ENCODE measurements at regions of chr11 and their contacts with region 1.

Region 1: GRCh38 chr11:72030472-72031045 is 31.9 kb downstream of the IL18BP start:
- DNase-seq: no peak
- H3K4me3 ChIP-seq: no peak overlapping the region
- H3K4me3 Mint-ChIP-seq: peak overlapping the region in 2 of 8 donors; percentile 2 to 16
- H3K27ac ChIP-seq: no peak overlapping the region
- H3K27ac Mint-ChIP-seq: peak overlapping the region; percentile 27 to 90 (median 73)
- H3K4me1 ChIP-seq: peaks cover 55% of the 10 kb centered on the region
- H3K4me1 Mint-ChIP-seq: peaks cover 27 to 56% (median 45%) of the 10 kb centered on the region in 4 donors
- H3K27me3 ChIP-seq: no peaks in the 10 kb centered on the region
- H3K27me3 Mint-ChIP-seq: no peaks in the 10 kb centered on the region

Region 2: DNA sequence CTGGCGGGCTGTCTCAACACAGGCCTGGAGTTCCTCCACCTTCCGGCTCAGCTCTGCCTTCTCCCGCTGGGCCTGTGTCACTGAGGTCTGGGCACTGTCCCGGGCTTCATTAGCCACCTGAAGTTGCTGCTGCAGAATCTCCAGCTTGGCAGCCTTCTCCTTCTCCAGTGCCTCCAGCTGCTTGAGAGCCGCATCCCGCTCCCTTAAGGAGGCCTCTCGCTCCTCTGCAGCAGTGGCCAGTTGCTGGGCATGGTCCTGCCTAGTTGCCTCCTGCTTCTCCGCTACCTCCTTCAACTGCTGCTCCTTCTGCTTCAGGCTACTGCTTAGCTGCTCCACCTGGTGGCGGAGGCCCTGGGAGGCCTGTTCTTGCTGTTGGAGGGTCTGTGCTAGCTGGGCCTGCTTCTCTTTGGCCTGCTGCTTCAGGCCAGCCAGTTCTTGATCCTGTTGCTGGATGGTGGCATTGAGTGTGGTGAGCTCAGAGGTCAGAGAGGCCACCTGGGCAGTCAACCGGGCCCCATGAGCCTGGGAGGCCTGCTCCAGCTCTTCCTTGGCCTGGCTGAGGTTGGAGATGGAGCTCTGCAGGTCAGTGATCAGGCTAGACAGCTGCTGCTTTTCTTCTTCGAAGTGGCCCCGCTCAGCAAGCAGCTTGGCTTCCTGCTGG is 14.9 kb before region 1 on chr11:
- CTCF ChIA-PET with region 1: interaction called, 22 read pairs
- POLR2A ChIA-PET with region 1: interaction called, 3 read pairs
- intact Hi-C with region 1: no loop called
- DNase-seq: no peak
- H3K4me3 ChIP-seq: no peak overlapping the region
- H3K4me3 Mint-ChIP-seq: no peak overlapping the region
- H3K27ac ChIP-seq: no peak overlapping the region
- H3K27ac Mint-ChIP-seq: peak overlapping the region in 2 of 7 donors; percentile 53 to 65
- H3K4me1 ChIP-seq: no peaks in the 10 kb centered on the region
- H3K4me1 Mint-ChIP-seq: peaks cover 0 to 4% (median 2%) of the 10 kb centered on the region in 4 donors
- H3K27me3 ChIP-seq: no peaks in the 10 kb centered on the region
- H3K27me3 Mint-ChIP-seq: no peaks in the 10 kb centered on the region

Region 3: DNA sequence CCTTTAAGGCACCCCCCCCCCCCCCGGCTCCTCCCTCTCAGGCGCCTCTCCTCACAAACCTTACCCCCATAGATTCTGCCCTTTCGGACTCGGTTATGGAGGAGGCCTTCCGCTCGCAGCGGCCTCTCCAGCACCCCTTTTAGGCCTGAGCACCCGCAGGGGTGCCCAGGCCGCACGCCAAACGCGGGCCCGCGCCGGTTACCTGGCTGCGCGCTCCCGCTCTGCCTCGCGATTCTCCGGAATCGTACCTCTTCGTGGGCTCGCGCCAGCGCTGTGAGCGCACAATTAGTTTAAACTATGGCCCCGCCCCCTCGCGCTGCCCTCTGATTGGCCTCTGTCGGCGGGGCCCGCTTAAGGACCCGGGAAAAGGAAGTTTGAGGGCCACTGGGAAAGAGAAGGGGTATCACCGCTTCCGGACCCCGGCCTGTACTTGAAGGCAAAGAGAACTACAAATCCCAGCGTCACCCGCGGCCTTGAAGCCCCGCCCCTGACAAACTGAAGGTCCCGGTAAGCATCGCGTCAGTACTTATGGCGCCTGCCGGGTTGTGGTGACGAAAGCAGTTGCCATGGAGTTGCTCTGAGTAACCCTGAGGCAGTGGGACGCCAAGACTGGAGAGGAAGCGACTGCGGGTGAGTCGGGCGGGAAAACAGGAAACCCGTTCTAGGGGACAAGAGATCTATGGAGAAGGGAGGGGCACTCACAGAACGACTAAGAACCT is 49.9 kb after region 1 on chr11 and contains the starts of genes LRRC51 and NUMA1:
- CTCF ChIA-PET with region 1: interaction called, 46 read pairs
- POLR2A ChIA-PET with region 1: interaction called, 5 read pairs
- intact Hi-C with region 1: no loop called
- DNase-seq: peak; percentile 98 to 100 (median 99)
- H3K4me3 ChIP-seq: peak within 1 kb of the TSS; percentile 74 to 79
- H3K4me3 Mint-ChIP-seq: peak within 1 kb of the TSS; percentile 89 to 96 (median 93)
- H3K27ac ChIP-seq: peak within 1 kb of the TSS; percentile 75
- H3K27ac Mint-ChIP-seq: peak within 1 kb of the TSS; percentile 91 to 100 (median 99)
- H3K4me1 ChIP-seq: peaks cover 27% of the 10 kb centered on the region
- H3K4me1 Mint-ChIP-seq: peaks cover 31 to 53% (median 38%) of the 10 kb centered on the region in 4 donors
- H3K27me3 ChIP-seq: no peaks in the 10 kb centered on the region
- H3K27me3 Mint-ChIP-seq: no peaks in the 10 kb centered on the region
- total RNA-seq, gene LRRC51: 4.2 to 4.5 TPM
- total RNA-seq, gene NUMA1: 376 to 380 TPM

Region 4: DNA sequence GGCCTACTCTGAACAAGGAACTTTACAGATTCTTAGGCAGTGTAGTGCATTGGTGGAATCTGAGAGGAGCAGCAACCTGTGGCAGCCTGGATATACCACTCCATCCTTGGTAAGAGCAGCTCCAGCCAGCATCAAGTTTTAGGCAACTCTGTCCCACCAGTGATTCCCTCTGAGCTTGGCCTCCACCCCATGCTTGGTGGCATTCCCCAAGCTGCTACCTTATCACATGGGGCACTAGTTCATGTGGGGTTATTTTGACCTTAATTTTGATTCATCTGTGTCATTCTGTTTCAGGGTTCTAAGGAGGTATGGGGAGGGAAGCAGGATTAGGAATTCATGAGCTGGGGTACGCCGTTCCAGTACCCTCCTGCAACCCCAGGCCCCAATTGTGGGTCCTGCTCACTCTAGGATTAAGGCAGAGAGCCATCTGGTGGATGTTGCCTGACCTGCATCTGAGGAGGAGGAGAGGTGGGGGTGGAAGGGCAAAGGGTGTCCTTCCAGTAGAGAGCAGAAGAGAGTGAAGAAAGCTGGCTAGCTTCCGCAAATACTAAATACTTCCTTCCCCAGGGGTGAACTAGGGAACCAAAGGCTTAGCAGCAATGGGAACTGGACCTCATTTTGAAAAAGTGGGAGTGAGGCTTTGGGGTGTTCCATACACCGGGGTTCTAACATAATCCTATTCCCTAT is 60.6 kb after region 1 on chr11:
- CTCF ChIA-PET with region 1: interaction called, 352 read pairs
- POLR2A ChIA-PET with region 1: interaction called, 29 read pairs
- intact Hi-C with region 1: loop called (anchors 1 kb)
- DNase-seq: peak; percentile 57 to 80 (median 66)
- H3K4me3 ChIP-seq: no peak overlapping the region
- H3K4me3 Mint-ChIP-seq: no peak overlapping the region
- H3K27ac ChIP-seq: no peak overlapping the region
- H3K27ac Mint-ChIP-seq: peak overlapping the region; percentile 10 to 91 (median 81)
- H3K4me1 ChIP-seq: no peaks in the 10 kb centered on the region
- H3K4me1 Mint-ChIP-seq: peaks cover 4 to 11% (median 9%) of the 10 kb centered on the region in 4 donors
- H3K27me3 ChIP-seq: no peaks in the 10 kb centered on the region
- H3K27me3 Mint-ChIP-seq: no peaks in the 10 kb centered on the region

Region 5: DNA sequence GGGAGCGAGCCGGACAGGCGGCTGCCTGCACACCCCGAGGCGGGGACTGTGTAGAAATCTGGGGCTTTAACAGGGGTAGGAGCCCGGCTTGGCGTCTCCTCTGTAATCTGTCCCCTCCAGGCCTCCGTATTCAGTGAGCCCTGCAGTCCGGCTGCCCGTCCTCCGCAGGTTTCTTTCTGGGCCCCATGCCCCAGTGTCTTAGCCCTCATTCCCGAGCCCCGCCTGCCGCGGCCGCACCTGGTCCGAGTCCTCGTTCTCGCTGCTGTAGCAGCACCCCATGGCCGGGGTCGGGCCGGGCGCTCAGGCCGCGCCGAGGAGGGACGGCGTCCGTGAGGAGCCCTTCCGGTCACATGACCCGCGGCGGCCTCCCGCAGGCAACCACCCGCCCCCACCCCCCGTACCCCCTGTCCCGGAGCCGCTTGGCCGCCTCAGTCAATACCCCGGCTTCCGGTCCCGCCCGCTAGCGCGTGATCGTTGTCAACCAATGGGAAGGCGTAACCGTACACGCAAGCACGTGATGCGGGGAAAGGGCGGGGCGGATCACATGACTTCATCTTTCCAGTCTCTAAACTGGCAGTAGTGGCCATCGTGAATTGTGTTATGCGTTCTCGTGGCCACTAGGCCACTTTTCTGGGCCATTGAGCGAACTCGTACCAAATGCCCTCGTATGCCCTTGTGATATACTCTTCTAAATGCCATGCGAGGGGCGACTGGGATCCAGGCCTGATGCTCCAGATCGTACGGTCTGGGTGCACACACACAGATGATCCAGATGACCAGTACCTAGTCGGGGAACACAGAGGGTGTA is 72.6 kb after region 1 on chr11 and contains the start of gene LAMTOR1:
- CTCF ChIA-PET with region 1: interaction called, 352 read pairs
- POLR2A ChIA-PET with region 1: interaction called, 4 read pairs
- intact Hi-C with region 1: no loop called
- DNase-seq: peak; percentile 94 to 99 (median 95)
- H3K4me3 ChIP-seq: peak within 1 kb of the TSS; percentile 75 to 93
- H3K4me3 Mint-ChIP-seq: peak within 1 kb of the TSS; percentile 80 to 95 (median 86)
- H3K27ac ChIP-seq: peak within 1 kb of the TSS; percentile 90
- H3K27ac Mint-ChIP-seq: peak within 1 kb of the TSS; percentile 89 to 95 (median 95)
- H3K4me1 ChIP-seq: peaks cover 32% of the 10 kb centered on the region
- H3K4me1 Mint-ChIP-seq: peaks cover 28 to 47% (median 38%) of the 10 kb centered on the region in 4 donors
- H3K27me3 ChIP-seq: no peaks in the 10 kb centered on the region
- H3K27me3 Mint-ChIP-seq: no peaks in the 10 kb centered on the region
- total RNA-seq, gene LAMTOR1: 66.8 to 68.6 TPM

Region 6: GRCh38 chr11:72112321-72113219 is 82.0 kb after region 1 on chr11 and contains the start of gene ANAPC15:
- CTCF ChIA-PET with region 1: interaction called, 11 read pairs
- POLR2A ChIA-PET with region 1: interaction called, 8 read pairs
- intact Hi-C with region 1: no loop called
- DNase-seq: peak; percentile 98 to 100 (median 99)
- H3K4me3 ChIP-seq: peak within 1 kb of the TSS; percentile 79 to 97
- H3K4me3 Mint-ChIP-seq: peak within 1 kb of the TSS; percentile 96 to 99 (median 97)
- H3K27ac ChIP-seq: peak within 1 kb of the TSS; percentile 97
- H3K27ac Mint-ChIP-seq: peak within 1 kb of the TSS; percentile 98 to 100 (median 99)
- H3K4me1 ChIP-seq: peaks cover 18% of the 10 kb centered on the region
- H3K4me1 Mint-ChIP-seq: peaks cover 15 to 34% (median 23%) of the 10 kb centered on the region in 4 donors
- H3K27me3 ChIP-seq: no peaks in the 10 kb centered on the region
- H3K27me3 Mint-ChIP-seq: peaks cover 2 to 3% of the 10 kb centered on the region in 2 donors
- total RNA-seq, gene ANAPC15: 38.6 to 40.2 TPM

Region 7: DNA sequence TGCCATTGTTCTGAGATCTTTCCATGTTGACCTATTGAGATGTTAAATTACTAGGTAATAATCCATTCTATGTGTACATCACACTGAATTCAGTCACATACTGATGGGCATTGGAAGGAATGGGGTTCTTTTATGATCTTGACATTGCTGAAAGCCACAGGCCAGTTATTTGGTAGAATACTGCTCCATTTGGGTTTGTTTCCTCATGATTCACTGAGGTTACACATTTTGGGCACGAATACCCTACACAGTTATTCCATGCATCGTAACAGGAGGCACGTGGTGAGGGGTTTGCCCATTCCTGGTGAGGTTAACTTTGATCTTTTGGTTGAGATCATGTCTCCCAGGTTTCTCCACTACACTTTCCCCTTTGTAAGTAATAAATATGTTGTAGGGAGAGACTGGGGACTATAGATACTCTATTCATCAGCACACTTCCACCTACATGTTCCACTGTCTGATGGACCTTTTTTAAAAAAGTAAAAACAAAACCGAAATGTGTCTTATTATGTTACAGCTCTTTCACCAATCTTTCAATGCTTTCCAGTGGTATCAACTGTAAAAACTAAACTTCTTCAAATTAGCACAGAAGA is 149.3 kb after region 1 on chr11:
- CTCF ChIA-PET with region 1: interaction called, 10 read pairs
- POLR2A ChIA-PET with region 1: no interaction called
- intact Hi-C with region 1: loop called (anchors 1 kb)
- DNase-seq: no peak
- H3K4me3 ChIP-seq: no peak overlapping the region
- H3K4me3 Mint-ChIP-seq: no peak overlapping the region
- H3K27ac ChIP-seq: no peak overlapping the region
- H3K27ac Mint-ChIP-seq: no peak overlapping the region
- H3K4me1 ChIP-seq: no peaks in the 10 kb centered on the region
- H3K4me1 Mint-ChIP-seq: peaks cover 0 to 4% (median 3%) of the 10 kb centered on the region in 4 donors
- H3K27me3 ChIP-seq: no peaks in the 10 kb centered on the region
- H3K27me3 Mint-ChIP-seq: peaks cover 10 to 12% of the 10 kb centered on the region in 2 donors

Measured in CD4-positive, alpha-beta memory T cell (primary cell).